ENCODE measurements at regions of chr17 and their contacts with region 1.

Region 1: DNA sequence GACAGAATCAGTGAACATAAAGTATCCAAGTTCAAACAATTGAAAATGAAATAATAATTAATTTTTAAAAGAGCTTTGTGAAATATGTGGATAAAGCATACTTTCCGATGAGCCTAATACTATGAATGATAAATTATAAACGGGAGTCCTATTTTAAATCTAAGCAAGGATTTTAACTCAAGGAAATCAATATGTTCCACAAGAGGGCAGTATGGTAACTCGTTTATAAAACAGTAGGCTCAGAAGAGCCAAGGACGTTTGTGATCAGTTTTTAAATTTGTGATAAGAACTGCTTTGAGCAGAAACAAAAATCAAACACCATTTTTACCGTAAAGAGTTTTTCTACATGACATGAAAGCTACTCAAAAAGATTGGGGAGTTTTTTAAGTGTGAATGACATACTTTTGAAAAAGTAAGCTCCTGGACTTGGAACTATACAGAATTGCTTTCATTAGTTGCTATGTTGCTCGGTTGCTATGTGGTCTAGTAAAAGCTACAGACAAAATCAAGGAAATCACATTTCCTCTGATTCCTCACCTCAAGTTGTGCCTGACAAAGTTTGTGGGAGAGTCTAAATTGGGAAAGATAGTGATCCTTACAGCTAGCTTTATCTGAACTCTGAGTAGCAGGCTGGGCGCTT is 11.8 kb upstream of the TEKT1 start:
- DNase-seq: no peak
- H3K4me3 ChIP-seq: no peak overlapping the region
- H3K27ac ChIP-seq: no peak overlapping the region
- H3K4me1 ChIP-seq: peaks cover 0 to 10% (median 5%) of the 10 kb centered on the region in 6 donors
- H3K27me3 ChIP-seq: peaks cover 0 to 43% (median 4%) of the 10 kb centered on the region in 7 donors
- CTCF ChIP-seq: peak; percentile 16 to 66 (median 52)
- POLR2A ChIP-seq: no peak

Region 2: GRCh38 chr17:6716736-6717135 is 126.6 kb before region 1 on chr17:
- intact Hi-C with region 1: no loop called
- DNase-seq: no peak
- H3K4me3 ChIP-seq: no peak overlapping the region
- H3K27ac ChIP-seq: no peak overlapping the region
- H3K4me1 ChIP-seq: peaks cover 0 to 26% (median 22%) of the 10 kb centered on the region in 6 donors
- H3K27me3 ChIP-seq: peaks cover 0 to 54% (median 27%) of the 10 kb centered on the region in 7 donors
- CTCF ChIP-seq: no peak
- POLR2A ChIP-seq: no peak

Region 3: GRCh38 chr17:6995431-6996255 is 152.3 kb after region 1 on chr17 and contains the start of gene ALOX12:
- intact Hi-C with region 1: loop called (anchors 10 kb)
- DNase-seq: no peak
- H3K4me3 ChIP-seq: peak within 1 kb of the TSS in 4 of 8 donors; percentile 4 to 42 (median 22)
- H3K27ac ChIP-seq: no peak within 1 kb of the TSS
- H3K4me1 ChIP-seq: peaks cover 0 to 20% (median 12%) of the 10 kb centered on the region in 6 donors
- H3K27me3 ChIP-seq: no peaks in the 10 kb centered on the region
- CTCF ChIP-seq: no peak
- POLR2A ChIP-seq: no peak
- total RNA-seq, gene ALOX12: 0.79 to 2.5 (median 1.4) TPM

Measured in spleen (tissue), 13 donors.